Motor neuron (in vitro differentiated cells): ENCODE measurements at regions of chrX and their contacts with region 1.

Region 1: DNA sequence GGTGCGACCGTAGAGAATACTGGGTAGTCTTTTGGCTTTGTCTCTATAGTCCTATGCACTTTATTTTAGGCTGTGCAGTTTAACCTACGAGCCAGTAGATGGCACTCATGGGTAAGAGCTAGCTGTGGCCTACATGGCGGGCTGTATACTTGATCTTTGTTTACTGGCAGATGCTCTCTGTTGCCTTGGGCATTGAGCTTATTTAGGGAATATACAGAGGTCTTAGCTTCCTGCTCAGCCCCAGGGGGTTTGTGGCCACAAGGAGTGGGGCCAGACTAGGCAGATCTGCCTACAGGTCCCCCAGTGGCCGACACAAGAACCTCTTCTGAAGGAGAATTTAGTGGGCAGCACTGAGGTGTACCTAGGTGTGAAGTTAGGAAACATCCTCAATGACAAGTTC is 227.6 kb upstream of the HDX start:
- ATAC-seq: peak in 5 of 8 experiments; percentile 63 to 97 (median 89)
- H3K4me3 ChIP-seq: no peak overlapping the region
- H3K27ac ChIP-seq: no peak overlapping the region
- H3K4me1 ChIP-seq: no peaks in the 10 kb centered on the region

Region 2: GRCh38 chrX:84336646-84337045 is 393.2 kb before region 1 on chrX:
- in situ Hi-C with region 1: no loop called
- ATAC-seq: no peak
- H3K4me3 ChIP-seq: no peak overlapping the region
- H3K27ac ChIP-seq: no peak overlapping the region
- H3K4me1 ChIP-seq: peaks cover 0 to 13% of the 10 kb centered on the region in 2 donors

Region 3: DNA sequence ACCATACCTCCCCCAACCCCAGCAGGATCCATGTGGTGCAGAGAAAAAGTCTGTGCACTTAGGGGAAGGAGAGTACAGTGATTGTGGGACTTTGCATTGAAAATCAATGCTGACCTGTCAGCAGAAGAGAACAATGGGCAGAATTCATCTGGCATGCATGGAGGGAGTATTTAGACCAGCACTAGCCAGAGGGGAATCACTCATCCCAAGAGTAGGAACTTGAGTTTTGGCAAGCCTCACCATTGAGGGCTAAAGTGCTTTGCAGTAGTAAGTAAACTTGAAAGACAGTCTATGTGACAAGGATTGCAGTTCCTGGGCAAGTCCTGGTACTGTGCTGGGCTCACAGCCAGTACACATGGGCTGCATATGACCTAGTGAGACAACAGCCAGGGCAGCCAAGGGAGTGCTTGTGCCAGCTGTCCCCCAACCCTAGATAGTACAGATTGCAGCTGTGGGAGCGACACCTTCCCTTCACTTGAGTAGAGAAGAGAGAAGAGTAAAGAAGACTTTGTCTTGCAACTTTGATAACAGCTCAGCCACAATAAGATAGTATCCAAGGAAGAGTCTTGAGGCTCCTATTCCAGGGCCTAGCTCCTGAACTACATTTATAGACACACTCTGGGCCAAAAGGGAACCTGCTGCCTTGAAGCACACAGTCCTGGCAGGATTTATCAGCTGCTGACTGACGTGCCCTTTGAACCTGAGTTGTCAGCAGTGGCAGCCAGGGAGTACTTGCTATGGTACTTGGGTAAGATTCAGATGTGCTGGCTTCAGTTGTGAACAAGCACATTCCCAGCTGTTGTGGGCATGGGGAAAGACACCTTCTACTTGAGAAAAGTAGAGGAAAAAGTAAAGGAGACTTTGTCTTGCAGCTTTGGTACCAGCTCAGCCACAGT is 276.2 kb before region 1 on chrX:
- in situ Hi-C with region 1: no loop called
- ATAC-seq: peak in 1 of 8 experiments; percentile 14
- H3K4me3 ChIP-seq: no peak overlapping the region
- H3K27ac ChIP-seq: no peak overlapping the region
- H3K4me1 ChIP-seq: no peaks in the 10 kb centered on the region

Region 4: DNA sequence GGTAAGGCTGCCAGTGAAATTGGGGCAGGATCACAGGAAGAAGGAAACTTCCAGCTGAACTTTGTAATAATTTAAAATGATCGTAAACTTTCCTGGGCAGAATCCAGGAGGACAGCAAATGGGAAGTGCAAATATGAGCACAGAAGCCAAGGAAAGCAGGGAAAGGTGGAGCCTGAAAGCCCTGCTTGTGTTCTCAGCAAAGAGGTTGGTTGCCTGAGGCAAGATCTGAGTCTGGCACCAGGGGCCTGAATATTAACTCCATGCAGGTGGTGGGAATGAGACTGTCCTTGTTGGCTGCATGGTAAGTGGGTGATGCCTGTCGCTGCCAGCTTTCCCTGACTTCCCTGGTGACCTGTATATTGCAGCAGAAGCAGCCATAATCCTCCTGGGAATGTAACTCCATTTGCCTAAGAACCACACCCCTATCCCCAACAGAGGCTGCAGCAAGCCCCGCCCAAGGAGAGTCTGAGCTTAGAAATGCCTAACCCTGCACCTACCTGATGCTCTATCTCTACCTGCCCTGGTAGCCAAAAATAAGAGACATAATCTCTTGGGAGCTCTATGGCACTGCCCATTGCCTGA is 95.5 kb before region 1 on chrX:
- in situ Hi-C with region 1: no loop called
- ATAC-seq: peak in 1 of 8 experiments; percentile 38
- H3K4me3 ChIP-seq: no peak overlapping the region
- H3K27ac ChIP-seq: no peak overlapping the region
- H3K4me1 ChIP-seq: no peaks in the 10 kb centered on the region

Region 5: DNA sequence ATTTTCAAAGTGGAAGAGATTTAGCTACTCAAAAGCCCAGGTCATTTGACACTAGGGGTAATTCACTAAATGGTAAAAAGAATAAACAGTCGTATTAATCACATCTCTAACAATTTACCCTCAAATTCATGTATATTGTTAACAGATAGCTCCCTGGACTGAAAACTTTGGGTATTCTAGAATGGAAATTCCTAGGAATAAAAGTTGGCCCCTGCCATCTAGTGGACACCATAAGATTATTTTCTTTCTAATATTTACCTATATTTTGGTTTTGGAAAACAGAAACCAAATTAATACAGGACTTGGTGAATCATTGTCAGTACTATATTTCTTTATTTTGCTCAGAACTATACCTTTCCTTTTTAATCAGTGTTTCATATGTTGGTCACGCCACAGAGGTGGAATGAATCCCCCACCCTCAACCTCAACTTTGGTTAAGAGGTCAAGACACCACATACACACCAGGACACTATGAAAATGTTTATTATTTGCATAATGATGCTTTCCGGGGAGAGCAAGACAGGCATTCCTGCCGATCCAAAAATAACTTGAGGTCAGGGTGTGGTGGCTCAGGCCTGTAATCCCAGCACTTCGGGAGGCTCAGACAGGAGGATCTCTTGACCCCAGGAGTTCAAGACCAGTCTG is 177.6 kb after region 1 on chrX:
- in situ Hi-C with region 1: loop called in 1 of 9 experiments (anchors 25 kb)
- ATAC-seq: peak in 3 of 8 experiments; percentile 25 to 57 (median 39)
- H3K4me3 ChIP-seq: no peak overlapping the region
- H3K27ac ChIP-seq: no peak overlapping the region
- H3K4me1 ChIP-seq: no peaks in the 10 kb centered on the region

Region 6: GRCh38 chrX:85031505-85031904 is 301.7 kb after region 1 on chrX:
- in situ Hi-C with region 1: loop called in 1 of 9 experiments (anchors 25 kb)
- ATAC-seq: peak in 1 of 8 experiments; percentile 42
- H3K4me3 ChIP-seq: no peak overlapping the region
- H3K27ac ChIP-seq: no peak overlapping the region
- H3K4me1 ChIP-seq: no peaks in the 10 kb centered on the region